Gastrocnemius medialis (tissue), 4 donors: ENCODE measurements at regions of chr5 and their contacts with region 1.

Region 1: GRCh38 chr5:472656-473553 is 29.9 kb downstream of the EXOC3 start:
- DNase-seq: peak; percentile 70 to 80
- ATAC-seq: peak; percentile 85 to 88
- H3K4me3 ChIP-seq: peak overlapping the region; percentile 74 to 99 (median 92)
- H3K27ac ChIP-seq: peak overlapping the region; percentile 84 to 94 (median 90)
- H3K4me1 ChIP-seq: peaks cover 11 to 24% of the 10 kb centered on the region in 2 donors
- H3K27me3 ChIP-seq: peaks cover 28 to 34% (median 32%) of the 10 kb centered on the region in 3 donors
- CTCF ChIP-seq: peak in 1 of 5 experiments; percentile 13
- POLR2A ChIP-seq: peak; percentile 67 to 69

Region 2: GRCh38 chr5:611721-612486 is 139.0 kb after region 1 on chr5 and contains the start of gene CEP72:
- in situ Hi-C with region 1: no loop called
- intact Hi-C with region 1: loop called (anchors 1 kb)
- DNase-seq: peak; percentile 78 to 82
- ATAC-seq: peak; percentile 95 to 96
- H3K4me3 ChIP-seq: peak within 1 kb of the TSS; percentile 70 to 78 (median 74)
- H3K27ac ChIP-seq: peak within 1 kb of the TSS in 2 of 4 donors; percentile 28 to 41
- H3K4me1 ChIP-seq: peaks cover 6 to 13% of the 10 kb centered on the region in 2 donors
- H3K27me3 ChIP-seq: peaks cover 0 to 2% (median 0%) of the 10 kb centered on the region in 3 donors
- CTCF ChIP-seq: no peak
- POLR2A ChIP-seq: no peak
- total RNA-seq, gene CEP72: 0.36 to 0.56 (median 0.40) TPM in 3 of 4 donors, not detected in the other

Region 3: GRCh38 chr5:1004461-1005248 is 531.8 kb after region 1 on chr5:
- in situ Hi-C with region 1: no loop called
- intact Hi-C with region 1: no loop called
- DNase-seq: peak; percentile 26 to 45
- ATAC-seq: peak; percentile 48 to 67
- H3K4me3 ChIP-seq: peak overlapping the region; percentile 39 to 67 (median 54)
- H3K27ac ChIP-seq: peak overlapping the region; percentile 52 to 64 (median 58)
- H3K4me1 ChIP-seq: peaks cover 0 to 3% of the 10 kb centered on the region in 2 donors
- H3K27me3 ChIP-seq: peaks cover 16 to 36% (median 33%) of the 10 kb centered on the region in 3 donors
- CTCF ChIP-seq: peak in 3 of 5 experiments; percentile 15 to 36 (median 20)
- POLR2A ChIP-seq: no peak

Region 4: GRCh38 chr5:1594357-1595106 is 1121.6 kb after region 1 on chr5:
- in situ Hi-C with region 1: no loop called
- intact Hi-C with region 1: loop called (anchors 5 kb)
- DNase-seq: peak; percentile 2 to 36
- ATAC-seq: peak; percentile 50 to 60
- H3K4me3 ChIP-seq: peak overlapping the region; percentile 38 to 56 (median 53)
- H3K27ac ChIP-seq: peak overlapping the region in 2 of 4 donors; percentile 27 to 48
- H3K4me1 ChIP-seq: no peaks in the 10 kb centered on the region
- H3K27me3 ChIP-seq: no peaks in the 10 kb centered on the region
- CTCF ChIP-seq: peak in 2 of 5 experiments; percentile 19 to 37
- POLR2A ChIP-seq: no peak